ENCODE measurements at regions of chr6 and their contacts with region 1.

Region 1: GRCh38 chr6:130322673-130323268 is 43.0 kb upstream of the TMEM200A start:
- DNase-seq: no peak
- H3K4me3 ChIP-seq: no peak overlapping the region
- H3K27ac ChIP-seq: no peak overlapping the region
- H3K4me1 ChIP-seq: peaks cover 8% of the 10 kb centered on the region
- H3K27me3 ChIP-seq: no peaks in the 10 kb centered on the region
- CTCF ChIP-seq: peak; percentile 68 to 87 (median 70)

Region 2: GRCh38 chr6:130760006-130760405 is 437.2 kb after region 1 on chr6:
- dilution Hi-C with region 1: loop called (anchors 25 kb)
- DNase-seq: peak; percentile 7
- H3K4me3 ChIP-seq: no peak overlapping the region
- H3K27ac ChIP-seq: no peak overlapping the region
- H3K4me1 ChIP-seq: no peaks in the 10 kb centered on the region
- H3K27me3 ChIP-seq: peaks cover 3% of the 10 kb centered on the region
- CTCF ChIP-seq: peak; percentile 78 to 85 (median 81)